Activated CD4-positive, alpha-beta T cell treated with anti-CD3 and anti-CD28 coated beads for 36 hours (primary cell): ENCODE measurements at regions of chr19 and their contacts with region 1.

Region 1: GRCh38 chr19:54159352-54160181 is at the start of gene LENG1:
- DNase-seq: peak; percentile 99
- ATAC-seq: peak; percentile 90
- H3K4me3 Mint-ChIP-seq: peak within 1 kb of the TSS; percentile 87
- H3K27ac Mint-ChIP-seq: peak within 1 kb of the TSS; percentile 98
- H3K4me1 Mint-ChIP-seq: peaks cover 56% of the 10 kb centered on the region
- H3K27me3 Mint-ChIP-seq: peaks cover 7% of the 10 kb centered on the region
- total RNA-seq, gene LENG1: 3.5 to 3.6 TPM

Region 2: GRCh38 chr19:54102421-54103169 is 57.0 kb before region 1 on chr19 and contains the start of gene NDUFA3:
- CTCF ChIA-PET with region 1: no interaction called
- POLR2A ChIA-PET with region 1: no interaction called
- intact Hi-C with region 1: loop called in 1 of 2 experiments (anchors 1 kb)
- DNase-seq: peak; percentile 98
- ATAC-seq: peak; percentile 99
- H3K4me3 Mint-ChIP-seq: peak within 1 kb of the TSS; percentile 93
- H3K27ac Mint-ChIP-seq: peak within 1 kb of the TSS; percentile 96
- H3K4me1 Mint-ChIP-seq: peaks cover 16% of the 10 kb centered on the region
- H3K27me3 Mint-ChIP-seq: no peaks in the 10 kb centered on the region
- total RNA-seq, gene NDUFA3: 99.9 to 158 TPM

Region 3: DNA sequence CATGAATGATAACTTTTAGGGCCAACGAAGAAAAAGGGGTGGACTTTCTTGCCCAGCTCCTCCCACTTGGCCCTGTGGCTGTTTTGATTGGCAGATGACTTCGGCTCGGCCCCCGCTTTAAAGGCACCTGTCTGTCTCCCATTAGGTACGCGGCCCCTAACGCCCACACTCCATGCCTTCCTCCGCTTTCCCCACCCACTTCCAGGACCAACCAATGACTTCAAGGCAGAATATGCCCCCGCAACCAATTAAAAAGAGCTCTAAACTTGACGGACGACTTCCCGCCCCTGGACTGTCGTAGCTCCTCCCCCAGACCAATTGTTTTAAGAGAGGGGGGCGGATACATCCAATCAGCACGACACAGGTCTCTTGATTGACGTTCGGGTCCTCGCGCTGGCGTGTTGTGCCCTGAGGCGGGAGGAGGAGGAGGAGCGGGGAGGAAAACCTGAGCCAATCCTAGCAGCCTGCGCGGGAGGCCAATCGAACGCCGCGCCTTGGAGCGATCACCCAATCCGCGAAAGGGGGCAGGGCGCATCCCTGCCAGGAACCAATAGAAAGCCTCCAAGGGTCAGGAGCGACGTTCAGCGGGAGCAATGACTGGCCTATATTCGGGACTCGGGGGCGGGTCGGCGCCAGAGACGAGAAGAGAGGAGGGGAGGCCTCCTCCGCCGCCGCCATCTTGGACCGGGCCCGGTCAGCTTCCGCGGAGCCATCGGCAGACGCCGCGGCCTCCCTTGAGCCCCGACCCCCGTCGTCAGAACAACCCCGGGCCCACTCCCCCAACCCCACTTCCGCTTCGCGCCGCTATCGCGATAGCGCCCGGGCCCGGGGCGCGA is 22.3 kb before region 1 on chr19 and contains the start of gene CNOT3:
- CTCF ChIA-PET with region 1: interaction called, 15 read pairs
- POLR2A ChIA-PET with region 1: interaction called, 22 read pairs
- intact Hi-C with region 1: loop called (anchors 1 kb)
- DNase-seq: peak; percentile 99
- ATAC-seq: peak; percentile 86
- H3K4me3 Mint-ChIP-seq: peak within 1 kb of the TSS; percentile 83
- H3K27ac Mint-ChIP-seq: peak within 1 kb of the TSS; percentile 91
- H3K4me1 Mint-ChIP-seq: peaks cover 44% of the 10 kb centered on the region
- H3K27me3 Mint-ChIP-seq: no peaks in the 10 kb centered on the region
- total RNA-seq, gene CNOT3: 61.0 to 93.8 TPM

Region 4: GRCh38 chr19:54209811-54210494 is 50.4 kb after region 1 on chr19:
- CTCF ChIA-PET with region 1: interaction called, 3 read pairs
- POLR2A ChIA-PET with region 1: interaction called, 3 read pairs
- intact Hi-C with region 1: loop called in 1 of 2 experiments (anchors 1 kb)
- DNase-seq: peak; percentile 48
- ATAC-seq: no peak
- H3K4me3 Mint-ChIP-seq: peak overlapping the region; percentile 4
- H3K27ac Mint-ChIP-seq: peak overlapping the region; percentile 59
- H3K4me1 Mint-ChIP-seq: peaks cover 64% of the 10 kb centered on the region
- H3K27me3 Mint-ChIP-seq: no peaks in the 10 kb centered on the region